ENCODE measurements at regions of chr5 and their contacts with region 1.

Region 1: DNA sequence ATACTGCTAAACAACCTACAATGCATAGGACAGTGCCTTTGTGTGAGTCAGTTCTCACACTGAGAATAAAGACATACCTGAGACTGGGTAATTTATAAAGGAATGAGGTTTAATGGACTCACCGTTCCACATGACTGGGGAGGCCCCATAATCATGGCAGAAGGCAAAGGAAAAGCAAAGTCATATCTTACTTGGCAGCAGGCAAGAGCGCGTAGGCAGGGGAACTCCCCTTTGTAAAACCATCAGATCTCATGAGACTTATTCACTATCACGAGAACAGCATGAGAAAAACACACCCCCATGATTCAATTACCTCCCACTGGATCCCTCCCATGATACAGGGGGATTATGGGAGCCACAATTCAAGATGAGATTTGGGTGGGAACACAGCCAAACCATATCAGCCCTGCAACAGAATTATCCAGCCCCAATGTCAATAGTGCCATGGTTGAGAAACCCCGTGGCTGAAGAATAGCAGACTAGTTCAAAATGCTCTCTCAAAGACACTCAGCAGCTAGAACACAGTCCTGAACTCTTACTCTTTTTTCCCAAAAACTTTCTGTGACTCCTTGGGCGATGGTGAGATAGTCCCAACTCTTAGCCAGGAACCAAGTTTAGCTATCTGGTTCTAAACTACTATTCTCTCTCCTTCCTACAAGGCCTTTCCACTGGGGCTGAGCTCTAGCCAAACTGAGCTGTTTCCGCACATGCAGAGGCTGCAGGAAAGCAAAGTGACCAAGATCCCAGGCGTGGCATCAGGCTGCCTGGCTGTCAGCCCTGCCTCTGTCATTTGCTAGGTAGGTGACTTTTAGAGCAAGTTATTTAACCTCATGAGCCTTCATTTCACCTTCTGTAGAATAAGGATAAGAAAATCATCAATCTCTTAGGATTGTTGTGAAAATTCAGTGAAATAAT is 21.7 kb downstream of the FAT2 start:
- DNase-seq: peak; percentile 83
- H3K4me3 ChIP-seq: no peak overlapping the region
- H3K27ac ChIP-seq: peak overlapping the region; percentile 83
- H3K4me1 ChIP-seq: peaks cover 55% of the 10 kb centered on the region
- H3K27me3 ChIP-seq: no peaks in the 10 kb centered on the region
- CTCF ChIP-seq: no peak

Region 2: DNA sequence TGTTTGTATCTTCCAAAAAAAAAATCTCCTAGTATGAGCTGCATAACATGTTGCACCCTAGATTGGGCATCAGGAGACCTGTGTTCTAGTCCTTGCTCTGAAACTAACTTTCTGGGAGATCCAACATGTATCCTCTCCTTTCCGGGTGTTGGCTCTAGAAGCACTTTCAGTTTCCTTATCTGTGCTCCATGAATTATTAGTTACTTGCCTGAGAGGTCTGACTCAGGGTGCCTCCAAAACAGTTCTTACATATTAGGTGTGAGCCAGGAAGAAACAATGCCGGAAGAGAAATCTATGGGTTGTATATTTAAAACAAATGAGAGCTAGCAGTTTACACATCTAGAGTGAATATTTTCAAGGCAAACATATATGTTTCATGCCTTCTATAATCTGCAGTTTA is 185.3 kb before region 1 on chr5:
- CTCF ChIA-PET with region 1: no interaction called
- dilution Hi-C with region 1: no loop called
- in situ Hi-C with region 1: no loop called
- intact Hi-C with region 1: no loop called
- DNase-seq: peak; percentile 26
- H3K4me3 ChIP-seq: no peak overlapping the region
- H3K27ac ChIP-seq: no peak overlapping the region
- H3K4me1 ChIP-seq: no peaks in the 10 kb centered on the region
- H3K27me3 ChIP-seq: no peaks in the 10 kb centered on the region
- CTCF ChIP-seq: no peak

Region 3: GRCh38 chr5:151447174-151448037 is 122.0 kb before region 1 on chr5 and contains the start of gene SLC36A1:
- CTCF ChIA-PET with region 1: no interaction called
- dilution Hi-C with region 1: no loop called
- in situ Hi-C with region 1: no loop called
- intact Hi-C with region 1: loop called (anchors 5 kb)
- DNase-seq: peak; percentile 83
- H3K4me3 ChIP-seq: peak within 1 kb of the TSS; percentile 56 to 77 (median 77)
- H3K27ac ChIP-seq: peak within 1 kb of the TSS; percentile 20
- H3K4me1 ChIP-seq: peaks cover 13% of the 10 kb centered on the region
- H3K27me3 ChIP-seq: peaks cover 2% of the 10 kb centered on the region
- CTCF ChIP-seq: peak; percentile 93 to 94
- total RNA-seq, gene SLC36A1: 9.7 to 11.0 TPM

Region 4: GRCh38 chr5:151585970-151586369 is 16.6 kb after region 1 on chr5:
- CTCF ChIA-PET with region 1: interaction called, 3 read pairs
- dilution Hi-C with region 1: no loop called
- in situ Hi-C with region 1: no loop called
- intact Hi-C with region 1: loop called (anchors 1 kb)
- DNase-seq: peak; percentile 84
- H3K4me3 ChIP-seq: no peak overlapping the region
- H3K27ac ChIP-seq: peak overlapping the region; percentile 73
- H3K4me1 ChIP-seq: peaks cover 70% of the 10 kb centered on the region
- H3K27me3 ChIP-seq: no peaks in the 10 kb centered on the region
- CTCF ChIP-seq: no peak

Region 5: GRCh38 chr5:151592855-151593408 is 23.5 kb after region 1 on chr5:
- CTCF ChIA-PET with region 1: no interaction called
- dilution Hi-C with region 1: no loop called
- in situ Hi-C with region 1: no loop called
- intact Hi-C with region 1: loop called (anchors 2 kb)
- DNase-seq: no peak
- H3K4me3 ChIP-seq: no peak overlapping the region
- H3K27ac ChIP-seq: no peak overlapping the region
- H3K4me1 ChIP-seq: peaks cover 62% of the 10 kb centered on the region
- H3K27me3 ChIP-seq: no peaks in the 10 kb centered on the region
- CTCF ChIP-seq: no peak

Region 6: DNA sequence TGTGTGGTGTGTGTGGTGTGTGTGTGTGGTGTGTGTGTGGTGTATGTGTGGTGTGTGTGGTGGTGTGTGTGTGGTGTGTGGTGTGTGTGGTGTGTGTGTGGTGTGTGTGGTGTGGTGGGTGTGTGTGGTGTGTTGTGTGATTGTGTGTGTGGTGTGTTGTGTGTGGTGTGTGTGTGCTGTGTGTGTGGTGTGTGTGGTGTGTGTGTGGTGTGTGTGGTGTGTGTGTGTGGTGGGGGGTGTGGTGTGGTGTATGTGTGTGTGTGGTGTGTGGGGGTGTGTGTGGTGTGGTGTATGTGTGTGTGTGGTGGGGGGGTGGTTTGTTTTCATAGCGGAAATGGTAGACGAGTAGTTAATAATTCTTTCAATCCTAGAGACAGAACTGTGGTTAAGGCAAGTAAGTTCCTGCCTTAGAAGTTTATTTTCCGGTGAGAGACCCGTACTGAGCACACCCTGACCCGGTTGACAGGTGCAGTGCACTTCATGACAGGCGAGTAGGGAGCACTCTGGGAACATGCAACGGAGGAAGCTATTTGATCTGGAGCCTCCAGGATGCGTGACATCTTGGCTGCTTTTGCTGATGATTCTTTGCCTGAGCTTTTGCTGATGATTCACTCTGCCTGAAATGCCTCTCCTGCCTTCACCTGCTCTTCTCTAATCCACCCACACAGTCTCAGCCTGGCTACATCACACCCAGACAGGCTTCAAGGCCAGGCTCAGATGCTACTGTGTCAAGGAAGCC is 43.5 kb after region 1 on chr5:
- CTCF ChIA-PET with region 1: no interaction called
- dilution Hi-C with region 1: loop called (anchors 5 kb)
- in situ Hi-C with region 1: no loop called
- intact Hi-C with region 1: loop called (anchors 1 kb)
- DNase-seq: peak; percentile 100
- H3K4me3 ChIP-seq: no peak overlapping the region
- H3K27ac ChIP-seq: peak overlapping the region; percentile 97
- H3K4me1 ChIP-seq: peaks cover 62% of the 10 kb centered on the region
- H3K27me3 ChIP-seq: no peaks in the 10 kb centered on the region
- CTCF ChIP-seq: no peak

Region 7: GRCh38 chr5:151686674-151687407 is 117.5 kb after region 1 on chr5 and contains the start of gene SPARC:
- CTCF ChIA-PET with region 1: no interaction called
- dilution Hi-C with region 1: no loop called
- in situ Hi-C with region 1: no loop called
- intact Hi-C with region 1: no loop called
- DNase-seq: peak; percentile 80
- H3K4me3 ChIP-seq: peak within 1 kb of the TSS; percentile 60 to 70 (median 62)
- H3K27ac ChIP-seq: peak within 1 kb of the TSS; percentile 81
- H3K4me1 ChIP-seq: peaks cover 42% of the 10 kb centered on the region
- H3K27me3 ChIP-seq: no peaks in the 10 kb centered on the region
- CTCF ChIP-seq: no peak
- total RNA-seq, gene SPARC: 222 to 382 TPM

Region 8: DNA sequence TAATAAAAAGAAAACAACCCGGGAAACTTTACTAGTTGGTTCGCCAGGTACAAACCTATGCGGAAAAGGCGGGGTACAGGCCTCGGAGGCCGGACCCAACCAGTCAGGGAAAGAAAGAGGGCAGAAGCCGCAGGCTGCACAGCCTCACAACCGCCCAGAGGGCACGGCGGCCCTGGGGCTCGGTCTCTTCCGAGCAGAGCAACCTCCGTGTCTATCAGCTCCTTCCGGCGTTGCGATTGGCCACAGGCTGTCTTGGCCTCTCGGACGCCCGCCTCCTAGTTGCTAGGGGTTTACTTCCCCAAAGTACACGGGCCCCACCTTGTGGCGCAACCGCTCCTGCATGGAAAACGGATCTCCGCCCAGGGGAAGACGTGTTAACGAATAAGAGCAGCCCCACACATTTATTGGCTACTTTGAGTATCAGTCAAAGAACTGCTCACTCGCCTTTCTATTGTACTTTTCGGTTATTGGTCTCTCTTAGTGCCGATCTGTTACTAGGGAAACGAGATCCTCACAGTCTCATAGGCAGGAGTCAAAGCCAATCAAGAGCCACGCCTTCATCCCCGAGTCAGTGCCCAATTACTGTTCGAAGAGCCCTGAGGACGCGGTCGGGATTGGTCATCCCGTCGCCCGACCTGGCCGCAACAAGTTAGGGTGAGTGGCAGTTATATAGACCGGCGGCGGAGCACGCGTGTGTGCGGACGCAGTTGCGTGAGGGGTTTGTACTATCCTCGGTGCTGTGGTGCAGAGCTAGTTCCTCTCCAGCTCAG is 202.1 kb after region 1 on chr5 and contains the start of gene G3BP1:
- CTCF ChIA-PET with region 1: no interaction called
- dilution Hi-C with region 1: no loop called
- in situ Hi-C with region 1: no loop called
- intact Hi-C with region 1: loop called (anchors 2 kb)
- DNase-seq: peak; percentile 100
- H3K4me3 ChIP-seq: peak within 1 kb of the TSS; percentile 63 to 93 (median 80)
- H3K27ac ChIP-seq: peak within 1 kb of the TSS; percentile 84
- H3K4me1 ChIP-seq: peaks cover 26% of the 10 kb centered on the region
- H3K27me3 ChIP-seq: no peaks in the 10 kb centered on the region
- CTCF ChIP-seq: peak; percentile 36 to 77
- total RNA-seq, gene G3BP1: 193 to 252 TPM